Endothelial cell of umbilical vein (primary cell): ENCODE measurements at regions of chr2 and their contacts with region 1.

Region 1: DNA sequence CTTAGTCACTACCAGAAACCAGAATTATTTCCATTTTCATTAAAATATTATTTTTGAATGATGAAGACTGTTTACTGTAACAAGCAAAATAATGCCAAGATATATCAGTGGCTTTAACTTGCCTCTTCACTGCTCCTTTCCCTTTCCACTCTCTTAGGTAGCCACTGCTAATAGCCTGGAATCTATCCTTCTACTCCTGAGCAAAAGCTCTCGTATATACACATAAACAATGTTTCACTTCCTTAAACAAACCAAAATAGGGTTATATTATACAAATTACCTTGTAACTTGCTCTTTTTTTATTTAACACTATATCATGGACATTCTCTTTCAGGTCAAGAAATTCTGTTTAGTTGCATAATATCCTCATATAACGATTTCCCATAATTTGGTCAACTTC is 20.8 kb downstream of the IMMT start:
- DNase-seq: no peak
- H3K4me3 ChIP-seq: no peak overlapping the region
- H3K27ac ChIP-seq: no peak overlapping the region
- H3K4me1 ChIP-seq: no peaks in the 10 kb centered on the region
- H3K27me3 ChIP-seq: no peaks in the 10 kb centered on the region
- CTCF ChIP-seq: no peak
- POLR2A ChIP-seq: no peak

Region 2: DNA sequence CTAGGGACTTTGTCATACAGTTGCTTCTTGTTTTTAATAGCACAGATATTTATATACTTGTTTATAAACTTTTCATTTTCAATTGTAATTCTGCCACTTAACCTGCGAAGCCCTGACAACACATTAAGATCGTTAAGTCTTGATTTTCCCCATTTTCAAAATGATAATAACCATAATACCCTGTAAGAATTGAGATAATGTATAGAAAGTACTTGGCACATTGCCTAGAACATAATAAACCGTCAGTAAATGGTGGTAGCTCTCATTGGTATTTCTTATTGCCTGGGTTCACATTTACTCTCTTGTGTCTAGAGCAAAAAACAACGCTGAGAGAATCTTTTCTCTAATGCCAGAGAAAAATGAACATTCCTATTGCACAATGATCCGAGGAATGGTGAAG is 49.8 kb before region 1 on chr2:
- CTCF ChIA-PET with region 1: no interaction called
- POLR2A ChIA-PET with region 1: no interaction called
- dilution Hi-C with region 1: no loop called
- intact Hi-C with region 1: loop called (anchors 5 kb)
- DNase-seq: no peak
- H3K4me3 ChIP-seq: no peak overlapping the region
- H3K27ac ChIP-seq: no peak overlapping the region
- H3K4me1 ChIP-seq: peaks cover 3% of the 10 kb centered on the region
- H3K27me3 ChIP-seq: no peaks in the 10 kb centered on the region
- CTCF ChIP-seq: no peak
- POLR2A ChIP-seq: no peak